ENCODE measurements at regions of chr14 and their contacts with region 1.

Region 1: DNA sequence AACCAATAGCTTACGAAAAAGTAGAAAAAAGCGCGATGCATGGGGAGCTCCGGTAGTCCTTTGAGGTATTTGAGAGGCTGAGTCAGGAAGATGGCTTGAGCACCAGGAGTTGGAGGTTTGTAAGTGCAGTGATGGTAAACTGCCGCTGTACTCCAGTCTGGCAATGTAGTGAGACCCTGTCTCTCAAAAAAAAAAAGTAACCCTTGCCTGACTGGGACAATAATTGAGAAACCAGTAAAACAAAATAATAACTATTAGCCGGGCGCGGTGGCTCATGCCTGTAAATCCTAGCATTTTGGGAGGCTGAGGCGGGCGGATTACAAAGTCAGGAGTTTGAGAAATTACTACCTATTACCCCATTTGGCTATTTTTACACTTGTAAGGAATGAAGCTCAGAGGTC is 632 bp upstream of the ACOT2 start:
- DNase-seq: peak; percentile 43
- ATAC-seq: peak; percentile 8
- H3K4me3 Mint-ChIP-seq: peak overlapping the region; percentile 88
- H3K27ac Mint-ChIP-seq: peak overlapping the region; percentile 99
- H3K4me1 Mint-ChIP-seq: peaks cover 43% of the 10 kb centered on the region
- H3K27me3 Mint-ChIP-seq: no peaks in the 10 kb centered on the region
- CTCF ChIP-seq: no peak

Region 2: GRCh38 chr14:73491256-73492042 is 76.9 kb before region 1 on chr14:
- CTCF ChIA-PET with region 1: interaction called, 12 read pairs
- POLR2A ChIA-PET with region 1: interaction called, 11 read pairs
- intact Hi-C with region 1: no loop called
- DNase-seq: peak; percentile 78
- ATAC-seq: peak; percentile 70
- H3K4me3 Mint-ChIP-seq: peak overlapping the region; percentile 82
- H3K27ac Mint-ChIP-seq: peak overlapping the region; percentile 35
- H3K4me1 Mint-ChIP-seq: peaks cover 39% of the 10 kb centered on the region
- H3K27me3 Mint-ChIP-seq: peaks cover 2% of the 10 kb centered on the region
- CTCF ChIP-seq: no peak

Region 3: GRCh38 chr14:73526569-73526968 is 41.8 kb before region 1 on chr14:
- CTCF ChIA-PET with region 1: interaction called, 4 read pairs
- POLR2A ChIA-PET with region 1: no interaction called
- intact Hi-C with region 1: loop called (anchors 5 kb)
- DNase-seq: no peak
- ATAC-seq: no peak
- H3K4me3 Mint-ChIP-seq: no peak overlapping the region
- H3K27ac Mint-ChIP-seq: no peak overlapping the region
- H3K4me1 Mint-ChIP-seq: no peaks in the 10 kb centered on the region
- H3K27me3 Mint-ChIP-seq: no peaks in the 10 kb centered on the region
- CTCF ChIP-seq: no peak

Region 4: DNA sequence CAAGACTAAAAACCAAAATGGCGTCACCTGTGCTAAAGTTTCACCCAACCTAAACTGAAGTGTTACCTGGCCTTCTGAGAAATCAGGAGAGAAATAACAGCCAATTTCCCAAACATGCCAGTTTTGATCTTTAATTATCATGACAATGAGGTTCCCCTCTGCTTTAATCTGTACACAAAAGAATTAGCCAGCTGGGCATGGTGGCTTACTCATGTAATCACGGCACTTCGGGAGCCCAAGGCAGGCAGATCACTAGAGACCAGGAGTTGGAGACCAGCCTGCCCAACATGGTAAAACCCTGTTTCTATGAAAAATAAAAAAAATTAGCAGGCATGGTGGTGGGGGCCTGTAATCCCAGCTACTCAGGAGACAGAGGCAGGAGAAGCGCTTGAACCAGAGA is 14.5 kb before region 1 on chr14:
- CTCF ChIA-PET with region 1: no interaction called
- POLR2A ChIA-PET with region 1: no interaction called
- intact Hi-C with region 1: no loop called
- DNase-seq: no peak
- ATAC-seq: no peak
- H3K4me3 Mint-ChIP-seq: no peak overlapping the region
- H3K27ac Mint-ChIP-seq: no peak overlapping the region
- H3K4me1 Mint-ChIP-seq: no peaks in the 10 kb centered on the region
- H3K27me3 Mint-ChIP-seq: no peaks in the 10 kb centered on the region
- CTCF ChIP-seq: no peak

Region 5: DNA sequence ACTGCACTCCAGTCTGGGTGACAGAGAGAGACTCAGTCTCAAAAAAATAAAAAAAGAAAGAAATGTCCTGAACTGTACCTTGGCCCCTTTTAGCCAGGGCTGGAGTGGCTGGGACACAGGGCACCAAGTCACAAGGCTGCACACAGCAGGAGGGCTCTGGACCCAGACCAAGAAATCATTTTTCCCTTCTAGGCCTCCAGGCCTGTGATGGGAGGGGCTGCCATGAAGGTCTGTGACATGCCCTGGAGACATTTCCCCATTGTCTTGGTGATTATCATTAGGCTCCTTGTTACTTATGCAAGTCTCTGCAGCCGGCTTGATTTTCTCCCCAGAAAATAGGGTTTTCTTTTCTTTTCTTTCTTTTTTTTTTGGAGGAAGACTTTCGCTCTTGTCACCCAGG is 38.9 kb after region 1 on chr14:
- CTCF ChIA-PET with region 1: no interaction called
- POLR2A ChIA-PET with region 1: no interaction called
- intact Hi-C with region 1: no loop called
- DNase-seq: no peak
- ATAC-seq: no peak
- H3K4me3 Mint-ChIP-seq: no peak overlapping the region
- H3K27ac Mint-ChIP-seq: no peak overlapping the region
- H3K4me1 Mint-ChIP-seq: peaks cover 2% of the 10 kb centered on the region
- H3K27me3 Mint-ChIP-seq: no peaks in the 10 kb centered on the region
- CTCF ChIP-seq: no peak

Measured in activated CD8-positive, alpha-beta T cell treated with anti-CD3 and anti-CD28 coated beads for 36 hours (primary cell).